Endothelial cell of umbilical vein (primary cell): ENCODE measurements at regions of chr14 and their contacts with region 1.

Region 1: GRCh38 chr14:45134051-45134958 is at the start of gene FKBP3:
- DNase-seq: peak; percentile 97
- H3K4me3 ChIP-seq: peak within 1 kb of the TSS; percentile 78 to 90 (median 84)
- H3K27ac ChIP-seq: peak within 1 kb of the TSS; percentile 61
- H3K4me1 ChIP-seq: peaks cover 20% of the 10 kb centered on the region
- H3K27me3 ChIP-seq: no peaks in the 10 kb centered on the region
- CTCF ChIP-seq: peak in 1 of 2 donors; percentile 10
- POLR2A ChIP-seq: peak; percentile 88
- total RNA-seq, gene FKBP3: 88.2 and 92.9 TPM in 2 replicates

Region 2: DNA sequence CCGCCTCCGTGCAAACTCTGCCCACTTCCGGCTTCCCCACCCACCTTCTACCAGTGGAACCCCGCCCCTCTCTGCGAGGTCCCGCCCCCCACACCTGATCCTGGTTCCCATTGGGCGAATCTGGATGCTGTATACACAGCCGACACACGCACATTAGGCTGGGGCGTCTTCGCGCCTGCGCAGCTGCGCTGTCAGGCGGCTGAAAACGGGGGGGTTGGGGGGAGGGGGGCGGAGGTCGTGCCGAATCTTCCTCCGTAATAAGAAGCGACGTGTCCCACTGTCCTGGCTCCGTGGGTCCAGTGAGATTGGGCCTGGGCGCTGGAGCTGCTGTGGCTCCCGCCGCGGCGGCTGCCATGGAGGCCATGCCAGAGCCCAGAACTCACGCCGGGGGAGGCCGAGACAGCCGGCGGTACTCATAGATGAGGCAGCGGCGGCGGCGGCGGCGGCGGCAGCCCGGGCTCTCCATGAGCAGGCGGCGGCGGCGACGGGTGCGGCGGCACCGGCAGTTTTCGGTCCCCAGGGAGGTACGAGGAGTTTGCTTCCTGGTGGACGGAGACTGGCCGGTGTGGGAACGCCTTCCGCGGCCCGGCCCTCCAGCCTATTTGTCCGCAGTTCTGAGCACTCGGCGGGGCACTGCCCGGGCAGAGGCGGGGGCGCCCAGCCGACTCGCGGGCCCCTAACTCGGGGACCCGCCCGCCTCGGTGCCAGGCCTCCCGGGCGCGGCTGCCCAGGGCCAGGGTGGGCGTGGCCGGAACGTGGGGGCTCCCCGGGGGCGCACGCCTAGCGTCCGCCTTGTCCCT is 237.1 kb before region 1 on chr14:
- CTCF ChIA-PET with region 1: no interaction called
- POLR2A ChIA-PET with region 1: no interaction called
- dilution Hi-C with region 1: no loop called
- intact Hi-C with region 1: loop called (anchors 1 kb)
- DNase-seq: peak; percentile 97
- H3K4me3 ChIP-seq: peak overlapping the region; percentile 64 to 76 (median 75)
- H3K27ac ChIP-seq: peak overlapping the region; percentile 68
- H3K4me1 ChIP-seq: peaks cover 12% of the 10 kb centered on the region
- H3K27me3 ChIP-seq: no peaks in the 10 kb centered on the region
- CTCF ChIP-seq: no peak
- POLR2A ChIP-seq: peak; percentile 65

Region 3: GRCh38 chr14:44961604-44962333 is 172.5 kb before region 1 on chr14 and contains the starts of genes KLHL28 and TOGARAM1:
- CTCF ChIA-PET with region 1: interaction called, 3 read pairs
- POLR2A ChIA-PET with region 1: no interaction called
- dilution Hi-C with region 1: no loop called
- intact Hi-C with region 1: loop called (anchors 1 kb)
- DNase-seq: peak; percentile 100
- H3K4me3 ChIP-seq: peak within 1 kb of the TSS; percentile 71 to 83 (median 72)
- H3K27ac ChIP-seq: peak within 1 kb of the TSS; percentile 60
- H3K4me1 ChIP-seq: peaks cover 35% of the 10 kb centered on the region
- H3K27me3 ChIP-seq: no peaks in the 10 kb centered on the region
- CTCF ChIP-seq: no peak
- POLR2A ChIP-seq: peak; percentile 95
- total RNA-seq, gene KLHL28: 7.3 and 8.4 TPM in 2 replicates
- total RNA-seq, gene TOGARAM1: 13.3 and 13.8 TPM in 2 replicates

Region 4: GRCh38 chr14:45112889-45113781 is 21.2 kb before region 1 on chr14:
- CTCF ChIA-PET with region 1: interaction called, 15 read pairs
- POLR2A ChIA-PET with region 1: interaction called, 4 read pairs
- dilution Hi-C with region 1: no loop called
- intact Hi-C with region 1: loop called (anchors 2 kb)
- DNase-seq: peak; percentile 51
- H3K4me3 ChIP-seq: no peak overlapping the region
- H3K27ac ChIP-seq: no peak overlapping the region
- H3K4me1 ChIP-seq: peaks cover 14% of the 10 kb centered on the region
- H3K27me3 ChIP-seq: no peaks in the 10 kb centered on the region
- CTCF ChIP-seq: no peak
- POLR2A ChIP-seq: no peak

Region 5: GRCh38 chr14:45267071-45267470 is 132.8 kb after region 1 on chr14:
- CTCF ChIA-PET with region 1: interaction called, 12 read pairs
- POLR2A ChIA-PET with region 1: no interaction called
- dilution Hi-C with region 1: no loop called
- intact Hi-C with region 1: loop called (anchors 1 kb)
- DNase-seq: no peak
- H3K4me3 ChIP-seq: no peak overlapping the region
- H3K27ac ChIP-seq: no peak overlapping the region
- H3K4me1 ChIP-seq: no peaks in the 10 kb centered on the region
- H3K27me3 ChIP-seq: peaks cover 3 to 6% of the 10 kb centered on the region in 2 experiments
- CTCF ChIP-seq: no peak
- POLR2A ChIP-seq: no peak